Activated CD4-positive, alpha-beta T cell treated with anti-CD3 and anti-CD28 coated beads, Interleukin-2, amount 10 ng/mL, durations not matched to agents 24 days and 14 days (primary cell): ENCODE measurements at regions of chr18 and their contacts with region 1.

Region 1: GRCh38 chr18:54119524-54120019 is 104.9 kb downstream of the MBD2 start:
- DNase-seq: peak; percentile 79
- H3K4me3 Mint-ChIP-seq: peak overlapping the region; percentile 60
- H3K27ac Mint-ChIP-seq: peak overlapping the region; percentile 69
- H3K4me1 Mint-ChIP-seq: peaks cover 9% of the 10 kb centered on the region
- H3K27me3 Mint-ChIP-seq: peaks cover 7% of the 10 kb centered on the region

Region 2: DNA sequence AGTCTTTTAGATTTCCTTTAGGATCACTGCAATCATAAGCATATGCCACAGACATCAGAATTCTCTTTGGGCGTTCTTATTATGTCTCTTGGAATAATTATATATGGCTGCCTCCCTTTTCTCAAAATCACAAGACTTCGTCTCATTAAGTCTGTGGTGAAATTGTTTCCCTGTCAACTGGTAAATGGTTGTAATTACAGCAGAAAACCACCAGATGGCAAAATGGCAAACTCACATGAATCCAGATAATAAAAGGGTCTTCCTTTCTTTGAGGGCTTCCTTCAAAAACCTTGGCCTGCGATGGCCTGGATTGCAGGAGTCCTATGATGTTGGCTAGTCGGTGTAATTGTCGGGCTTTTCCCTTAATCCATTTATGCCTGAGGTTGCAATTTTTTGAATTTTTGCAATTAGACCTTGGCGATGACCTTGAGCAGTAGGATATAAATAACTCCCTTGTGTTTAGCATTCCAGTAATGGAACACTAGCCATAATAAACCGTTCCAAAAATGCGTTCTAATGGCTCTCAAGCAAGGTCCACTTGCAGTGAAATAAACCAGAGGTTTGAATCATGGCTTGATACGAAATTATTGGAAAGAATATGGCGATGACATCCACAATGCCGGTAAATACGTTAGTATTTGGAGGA is 551.5 kb before region 1 on chr18:
- intact Hi-C with region 1: loop called (anchors 1 kb)
- DNase-seq: peak; percentile 57
- H3K4me3 Mint-ChIP-seq: no peak overlapping the region
- H3K27ac Mint-ChIP-seq: no peak overlapping the region
- H3K4me1 Mint-ChIP-seq: no peaks in the 10 kb centered on the region
- H3K27me3 Mint-ChIP-seq: no peaks in the 10 kb centered on the region

Region 3: GRCh38 chr18:53687002-53687401 is 432.6 kb before region 1 on chr18:
- intact Hi-C with region 1: loop called (anchors 5 kb)
- DNase-seq: no peak
- H3K4me3 Mint-ChIP-seq: no peak overlapping the region
- H3K27ac Mint-ChIP-seq: no peak overlapping the region
- H3K4me1 Mint-ChIP-seq: no peaks in the 10 kb centered on the region
- H3K27me3 Mint-ChIP-seq: no peaks in the 10 kb centered on the region

Region 4: GRCh38 chr18:53909668-53910067 is 209.9 kb before region 1 on chr18:
- intact Hi-C with region 1: loop called (anchors 1 kb)
- DNase-seq: peak; percentile 73
- H3K4me3 Mint-ChIP-seq: no peak overlapping the region
- H3K27ac Mint-ChIP-seq: no peak overlapping the region
- H3K4me1 Mint-ChIP-seq: no peaks in the 10 kb centered on the region
- H3K27me3 Mint-ChIP-seq: peaks cover 4% of the 10 kb centered on the region